ENCODE measurements at regions of chr7 and their contacts with region 1.

Region 1: DNA sequence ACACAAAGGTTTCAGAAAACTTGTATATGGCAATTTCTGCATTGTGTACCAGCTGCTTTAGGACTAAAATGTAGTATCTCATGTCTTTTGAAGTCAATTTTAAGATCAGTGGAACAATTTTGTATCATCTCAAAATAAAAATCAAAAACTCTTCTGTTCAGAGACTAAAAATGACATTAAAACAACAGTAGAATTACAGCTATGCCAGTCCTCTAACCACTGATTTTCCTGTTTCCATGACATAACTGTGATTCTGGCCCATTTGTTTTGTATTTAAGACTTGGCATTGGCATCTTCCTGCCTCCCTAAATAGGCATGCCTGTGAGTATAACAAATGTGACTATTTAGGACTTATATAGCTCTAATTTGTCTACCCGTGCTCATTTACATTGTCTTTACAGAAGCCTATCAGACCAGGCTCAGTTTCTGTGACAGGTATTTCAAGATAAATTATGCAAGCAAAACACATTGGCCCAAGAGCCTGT is 29.1 kb upstream of the VPS41 start:
- DNase-seq: no peak
- ATAC-seq: no peak
- H3K4me3 ChIP-seq: no peak overlapping the region
- H3K4me3 Mint-ChIP-seq: no peak overlapping the region
- H3K27ac ChIP-seq: no peak overlapping the region
- H3K27ac Mint-ChIP-seq: no peak overlapping the region
- H3K4me1 ChIP-seq: no peaks in the 10 kb centered on the region
- H3K4me1 Mint-ChIP-seq: peaks cover 0 to 3% (median 0%) of the 10 kb centered on the region in 7 donors
- H3K27me3 ChIP-seq: no peaks in the 10 kb centered on the region
- H3K27me3 Mint-ChIP-seq: peaks cover 5 to 22% (median 11%) of the 10 kb centered on the region in 5 donors

Region 2: GRCh38 chr7:37784015-37784414 is 1154.0 kb before region 1 on chr7:
- CTCF ChIA-PET with region 1: no interaction called
- POLR2A ChIA-PET with region 1: no interaction called
- intact Hi-C with region 1: no loop called
- DNase-seq: no peak
- ATAC-seq: no peak
- H3K4me3 ChIP-seq: no peak overlapping the region
- H3K4me3 Mint-ChIP-seq: no peak overlapping the region
- H3K27ac ChIP-seq: no peak overlapping the region
- H3K27ac Mint-ChIP-seq: no peak overlapping the region
- H3K4me1 ChIP-seq: no peaks in the 10 kb centered on the region
- H3K4me1 Mint-ChIP-seq: peaks cover 0 to 9% (median 5%) of the 10 kb centered on the region in 7 donors
- H3K27me3 ChIP-seq: no peaks in the 10 kb centered on the region
- H3K27me3 Mint-ChIP-seq: peaks cover 7 to 16% (median 12%) of the 10 kb centered on the region in 5 donors

Region 3: DNA sequence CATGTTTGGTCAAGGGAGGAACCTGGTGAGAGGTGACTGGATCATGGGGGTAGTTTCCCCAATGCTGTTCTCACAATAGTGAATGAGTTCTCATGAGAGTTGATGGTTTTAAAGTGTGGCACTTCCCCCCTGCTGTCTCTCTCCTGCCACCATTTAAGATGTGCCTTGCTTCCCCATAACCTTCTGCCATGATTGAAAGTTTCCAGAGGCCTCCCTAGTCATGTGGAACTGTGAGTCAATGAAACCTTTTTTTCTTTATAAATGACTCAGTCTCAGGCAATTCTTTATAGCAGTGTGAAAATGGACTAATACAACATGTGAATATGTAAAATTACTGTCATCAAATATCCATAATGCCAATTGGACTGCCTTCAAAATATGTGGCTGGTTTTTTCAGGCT is 499.1 kb before region 1 on chr7:
- CTCF ChIA-PET with region 1: no interaction called
- POLR2A ChIA-PET with region 1: no interaction called
- intact Hi-C with region 1: no loop called
- DNase-seq: no peak
- ATAC-seq: no peak
- H3K4me3 ChIP-seq: no peak overlapping the region
- H3K4me3 Mint-ChIP-seq: no peak overlapping the region
- H3K27ac ChIP-seq: no peak overlapping the region
- H3K27ac Mint-ChIP-seq: no peak overlapping the region
- H3K4me1 ChIP-seq: peaks cover 0 to under 1% of the 10 kb centered on the region in 2 donors
- H3K4me1 Mint-ChIP-seq: peaks cover 0 to 5% (median 3%) of the 10 kb centered on the region in 7 donors
- H3K27me3 ChIP-seq: no peaks in the 10 kb centered on the region
- H3K27me3 Mint-ChIP-seq: peaks cover 0 to 14% (median 0%) of the 10 kb centered on the region in 5 donors

Region 4: GRCh38 chr7:38955892-38956291 is 17.8 kb after region 1 on chr7:
- CTCF ChIA-PET with region 1: no interaction called
- POLR2A ChIA-PET with region 1: interaction called, 10 read pairs
- intact Hi-C with region 1: no loop called
- DNase-seq: no peak
- ATAC-seq: no peak
- H3K4me3 ChIP-seq: no peak overlapping the region
- H3K4me3 Mint-ChIP-seq: no peak overlapping the region
- H3K27ac ChIP-seq: no peak overlapping the region
- H3K27ac Mint-ChIP-seq: no peak overlapping the region
- H3K4me1 ChIP-seq: no peaks in the 10 kb centered on the region
- H3K4me1 Mint-ChIP-seq: no peaks in the 10 kb centered on the region
- H3K27me3 ChIP-seq: no peaks in the 10 kb centered on the region
- H3K27me3 Mint-ChIP-seq: peaks cover 9 to 50% (median 34%) of the 10 kb centered on the region in 5 donors